Ovary (tissue), 10 donors: ENCODE measurements at regions of chr9 and their contacts with region 1.

Region 1: GRCh38 chr9:95127249-95128176 is 190.0 kb downstream of the FANCC start:
- DNase-seq: peak; percentile 86 to 92 (median 90)
- H3K4me3 ChIP-seq: peak overlapping the region; percentile 42
- H3K27ac ChIP-seq: no peak overlapping the region
- H3K4me1 ChIP-seq: peaks cover 2% of the 10 kb centered on the region
- H3K27me3 ChIP-seq: no peaks in the 10 kb centered on the region
- CTCF ChIP-seq: peak; percentile 93 to 95 (median 95)
- EP300 ChIP-seq: no peak
- POLR2A ChIP-seq: peak; percentile 29

Region 2: GRCh38 chr9:94681508-94681907 is 446.0 kb before region 1 on chr9:
- intact Hi-C with region 1: loop called (anchors 2 to 5 kb)
- DNase-seq: peak; percentile 75 to 83 (median 82)
- H3K4me3 ChIP-seq: no peak overlapping the region
- H3K27ac ChIP-seq: no peak overlapping the region
- H3K4me1 ChIP-seq: no peaks in the 10 kb centered on the region
- H3K27me3 ChIP-seq: no peaks in the 10 kb centered on the region
- CTCF ChIP-seq: peak; percentile 67 to 81 (median 71)
- EP300 ChIP-seq: no peak
- POLR2A ChIP-seq: no peak

Region 3: GRCh38 chr9:94772639-94773303 is 354.7 kb before region 1 on chr9:
- intact Hi-C with region 1: loop called in 1 of 4 experiments (anchors 5 kb)
- DNase-seq: no peak
- H3K4me3 ChIP-seq: no peak overlapping the region
- H3K27ac ChIP-seq: no peak overlapping the region
- H3K4me1 ChIP-seq: peaks cover 4% of the 10 kb centered on the region
- H3K27me3 ChIP-seq: no peaks in the 10 kb centered on the region
- CTCF ChIP-seq: no peak
- EP300 ChIP-seq: no peak
- POLR2A ChIP-seq: no peak

Region 4: DNA sequence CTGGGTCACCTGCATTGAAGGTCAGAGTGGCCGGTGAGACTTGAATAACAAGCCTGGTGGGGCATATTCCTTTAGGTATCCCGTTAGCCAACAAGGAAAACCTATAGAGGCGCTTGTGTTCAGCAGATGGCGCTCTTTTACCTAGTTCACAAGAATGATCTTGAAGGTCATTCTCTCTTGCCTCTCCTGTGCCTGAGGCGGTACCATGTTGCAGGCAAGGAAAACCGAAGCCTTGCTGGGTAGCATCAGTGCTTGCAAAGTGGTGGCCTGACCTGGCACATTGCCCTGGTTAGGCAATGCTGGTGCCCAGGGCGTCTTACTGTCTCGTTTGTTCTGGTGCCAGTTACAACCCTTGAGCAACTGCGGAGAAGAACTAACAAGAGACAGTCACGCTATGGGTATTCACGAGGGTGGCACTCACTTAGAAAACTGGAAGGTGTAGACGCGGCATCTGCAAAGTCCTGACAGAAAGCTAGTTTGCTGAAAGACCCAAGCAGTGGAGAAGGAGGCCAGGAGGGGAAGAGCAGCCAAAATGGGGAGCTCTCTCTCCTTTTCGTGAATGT is 344.3 kb before region 1 on chr9:
- intact Hi-C with region 1: loop called in 3 of 4 experiments (anchors 2 to 5 kb)
- DNase-seq: peak; percentile 62 to 83 (median 69)
- H3K4me3 ChIP-seq: no peak overlapping the region
- H3K27ac ChIP-seq: no peak overlapping the region
- H3K4me1 ChIP-seq: peaks cover 3% of the 10 kb centered on the region
- H3K27me3 ChIP-seq: no peaks in the 10 kb centered on the region
- CTCF ChIP-seq: peak in 2 of 3 donors; percentile 71 to 79
- EP300 ChIP-seq: no peak
- POLR2A ChIP-seq: no peak

Region 5: GRCh38 chr9:95018099-95018936 is 109.2 kb before region 1 on chr9:
- intact Hi-C with region 1: loop called in 1 of 4 experiments (anchors 10 kb)
- DNase-seq: no peak
- H3K4me3 ChIP-seq: peak overlapping the region; percentile 5
- H3K27ac ChIP-seq: no peak overlapping the region
- H3K4me1 ChIP-seq: peaks cover 29% of the 10 kb centered on the region
- H3K27me3 ChIP-seq: no peaks in the 10 kb centered on the region
- CTCF ChIP-seq: no peak
- EP300 ChIP-seq: no peak
- POLR2A ChIP-seq: no peak

Region 6: DNA sequence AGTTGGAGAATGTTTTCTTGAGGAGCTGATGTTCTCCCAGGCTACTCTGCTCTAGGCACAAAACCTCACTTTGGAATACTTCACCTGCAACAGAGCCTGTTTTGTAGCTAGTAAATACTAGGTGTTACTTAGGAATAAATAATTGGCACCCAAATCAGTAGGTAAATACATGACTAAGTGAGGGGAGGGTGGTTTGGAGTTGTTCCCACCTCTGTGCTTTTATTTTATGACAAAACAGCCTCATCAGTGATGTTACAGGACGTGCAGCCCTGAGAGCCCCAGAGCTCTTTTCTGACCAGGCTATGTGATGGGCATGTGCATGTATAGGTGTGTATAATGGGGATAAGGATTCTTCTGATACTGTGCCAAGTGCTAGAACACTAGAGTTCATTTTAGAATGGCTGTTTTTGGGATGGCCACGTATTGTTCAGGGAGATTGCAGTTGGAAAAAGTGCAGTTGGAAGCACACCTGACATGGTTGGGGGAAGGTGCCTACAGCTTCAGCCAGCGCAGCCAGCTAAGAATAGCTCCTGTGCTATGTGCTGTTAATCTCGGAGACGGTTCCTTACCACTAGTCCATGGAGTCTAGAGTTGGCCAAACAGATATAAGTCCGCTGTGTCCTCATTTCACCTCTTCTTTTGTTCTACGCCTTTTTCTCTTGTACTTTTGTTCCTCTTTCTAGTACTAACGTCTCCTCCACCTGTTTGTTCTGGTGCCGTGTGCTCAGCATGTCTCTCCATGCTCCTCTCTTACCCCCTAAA is 94.8 kb before region 1 on chr9:
- intact Hi-C with region 1: no loop called
- DNase-seq: no peak
- H3K4me3 ChIP-seq: no peak overlapping the region
- H3K27ac ChIP-seq: no peak overlapping the region
- H3K4me1 ChIP-seq: peaks cover 22% of the 10 kb centered on the region
- H3K27me3 ChIP-seq: no peaks in the 10 kb centered on the region
- CTCF ChIP-seq: no peak
- EP300 ChIP-seq: no peak
- POLR2A ChIP-seq: no peak